ENCODE measurements at regions of chr14 and their contacts with region 1.

Region 1: DNA sequence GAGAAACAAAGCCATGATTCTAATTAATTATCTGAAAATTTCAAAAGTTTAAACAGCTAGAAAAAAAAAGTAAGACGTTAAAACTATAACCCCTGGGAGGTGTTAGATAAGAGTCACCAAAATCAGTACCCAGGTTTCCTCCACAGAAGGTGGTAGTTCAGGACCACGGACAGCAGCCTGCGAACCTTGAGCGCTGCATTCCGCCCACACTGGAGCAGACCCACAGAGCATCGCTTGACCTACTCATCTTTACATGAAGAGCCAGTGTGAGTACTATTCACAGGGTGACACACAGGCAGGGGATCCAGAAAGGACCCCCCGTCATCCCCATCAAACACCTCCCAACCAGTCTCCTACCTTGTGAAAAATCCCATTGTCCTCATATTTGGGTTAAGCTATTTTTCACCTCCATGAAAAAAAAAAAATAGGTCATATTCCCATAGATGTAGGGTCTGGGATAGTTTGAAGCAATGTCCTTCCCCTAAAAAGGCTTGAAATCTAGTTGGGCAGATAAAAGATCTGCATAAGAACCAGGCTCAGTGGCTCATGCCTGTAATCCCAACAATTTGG is 8.8 kb upstream of the CHGA start:
- DNase-seq: no peak
- H3K4me3 ChIP-seq: no peak overlapping the region
- H3K27ac ChIP-seq: no peak overlapping the region
- H3K4me1 ChIP-seq: peaks cover 0 to 43% of the 10 kb centered on the region in 2 experiments; a peak in 2 of 4 replicates
- H3K27me3 ChIP-seq: peaks cover 5% of the 10 kb centered on the region; the same call in 1 of the 2 replicates
- CTCF ChIP-seq: no peak
- EP300 ChIP-seq: no peak
- RAD21 ChIP-seq: no peak

Region 2: GRCh38 chr14:92890830-92891588 is 23.2 kb before region 1 on chr14:
- CTCF ChIA-PET with region 1: interaction called, 27 read pairs
- POLR2A ChIA-PET with region 1: interaction called, 79 read pairs
- DNase-seq: no peak
- H3K4me3 ChIP-seq: no peak overlapping the region
- H3K27ac ChIP-seq: peak overlapping the region in 1 of 2 experiments; percentile 81; a peak in 2 of 4 replicates
- H3K4me1 ChIP-seq: peaks cover 0 to 38% of the 10 kb centered on the region in 2 experiments; a peak in 2 of 4 replicates
- H3K27me3 ChIP-seq: no peaks in the 10 kb centered on the region; the same call in 1 of the 2 replicates
- CTCF ChIP-seq: no peak
- EP300 ChIP-seq: peak in 1 of 2 experiments; percentile 84; a peak in 2 of 4 replicates
- RAD21 ChIP-seq: peak; percentile 34; the same call in 1 of the 2 replicates

Region 3: GRCh38 chr14:92930737-92931602 is 16.8 kb after region 1 on chr14:
- CTCF ChIA-PET with region 1: interaction called, 4 read pairs
- POLR2A ChIA-PET with region 1: interaction called, 13 read pairs
- DNase-seq: no peak
- H3K4me3 ChIP-seq: no peak overlapping the region
- H3K27ac ChIP-seq: peak overlapping the region in 1 of 2 experiments; percentile 35; a peak in 1 of 4 replicates
- H3K4me1 ChIP-seq: peaks cover 0 to 85% of the 10 kb centered on the region in 2 experiments; a peak in 2 of 4 replicates
- H3K27me3 ChIP-seq: no peaks in the 10 kb centered on the region; the same call in 1 of the 2 replicates
- CTCF ChIP-seq: no peak
- EP300 ChIP-seq: no peak
- RAD21 ChIP-seq: no peak